Right ventricle myocardium inferior (tissue), 1 donor: ENCODE measurements at regions of chr17 and their contacts with region 1.

Region 1: DNA sequence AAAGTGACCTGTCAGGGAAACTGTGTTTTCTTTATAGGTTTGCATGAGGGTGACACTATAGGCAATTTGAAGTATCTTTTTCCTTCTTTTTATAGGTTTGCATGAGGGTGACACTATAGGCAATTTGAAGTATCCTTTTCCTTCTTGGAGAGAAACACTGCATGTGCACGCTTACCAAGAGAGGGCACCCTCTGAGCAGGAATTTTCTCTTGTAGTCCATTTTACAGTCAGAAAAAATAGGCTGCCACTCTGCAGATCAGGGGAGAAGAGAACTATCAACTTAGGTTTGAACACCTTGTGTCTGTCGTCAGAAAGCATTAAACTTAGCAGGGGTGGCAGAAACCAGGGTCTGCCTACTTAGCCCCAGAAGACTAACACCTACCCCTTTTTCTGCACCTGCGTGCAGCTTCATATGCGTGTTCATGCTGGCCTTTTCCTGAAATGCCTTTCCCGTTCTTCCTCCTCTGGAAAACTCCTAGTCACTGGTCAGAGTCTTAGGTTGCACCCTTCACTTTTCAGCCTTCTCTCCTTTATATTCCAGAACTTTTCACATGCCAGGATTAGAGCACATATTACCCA is 16.4 kb upstream of the SMIM36 start:
- DNase-seq: no peak
- ATAC-seq: peak; percentile 78

Region 2: DNA sequence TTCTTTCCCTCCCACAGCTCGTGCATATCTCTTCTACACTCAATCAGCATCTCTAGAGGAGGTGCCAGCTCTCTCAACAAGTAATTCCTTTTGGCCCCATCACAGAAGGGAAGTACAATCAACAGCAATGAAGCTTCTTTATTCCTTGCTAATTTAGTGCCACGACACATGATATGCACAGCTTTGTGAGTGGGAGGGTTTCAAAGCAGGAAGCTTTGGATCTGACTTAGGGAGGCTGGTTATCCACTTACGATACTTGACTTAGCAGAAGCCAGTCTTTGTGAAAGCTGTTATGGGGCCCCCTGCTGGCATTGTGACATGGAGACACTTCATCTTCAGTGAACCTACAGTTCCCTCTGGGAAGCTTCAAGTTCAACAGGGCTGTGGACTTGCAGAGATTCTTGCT is 114.0 kb after region 1 on chr17:
- intact Hi-C with region 1: loop called (anchors 2 kb)
- DNase-seq: no peak
- ATAC-seq: peak; percentile 78

Region 3: GRCh38 chr17:55717898-55718735 is 190.5 kb after region 1 on chr17:
- intact Hi-C with region 1: loop called (anchors 2 kb)
- DNase-seq: peak; percentile 86
- ATAC-seq: peak; percentile 51

Region 4: GRCh38 chr17:55770148-55770870 is 242.7 kb after region 1 on chr17:
- intact Hi-C with region 1: loop called (anchors 2 kb)
- DNase-seq: no peak
- ATAC-seq: peak; percentile 57

Region 5: DNA sequence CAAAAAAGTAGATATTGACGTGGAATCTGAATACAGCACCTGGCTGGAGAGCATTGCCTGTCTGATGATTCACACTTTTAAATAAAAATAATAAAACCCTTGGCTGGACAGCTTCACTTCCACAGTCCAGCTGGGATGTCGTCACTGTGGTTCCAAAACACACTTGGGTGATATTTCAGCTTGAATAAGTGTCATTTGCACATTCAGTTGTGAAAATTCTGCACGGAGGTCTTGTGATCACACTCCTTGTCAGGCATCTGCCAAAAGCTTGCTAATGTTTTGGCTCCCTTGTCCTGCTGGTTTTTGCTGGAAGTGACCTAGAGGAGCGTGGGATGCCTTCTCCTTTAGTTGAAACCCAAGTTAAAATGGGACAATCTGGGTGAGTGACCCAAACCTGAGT is 283.9 kb after region 1 on chr17:
- intact Hi-C with region 1: no loop called
- DNase-seq: no peak
- ATAC-seq: peak; percentile 54

Region 6: DNA sequence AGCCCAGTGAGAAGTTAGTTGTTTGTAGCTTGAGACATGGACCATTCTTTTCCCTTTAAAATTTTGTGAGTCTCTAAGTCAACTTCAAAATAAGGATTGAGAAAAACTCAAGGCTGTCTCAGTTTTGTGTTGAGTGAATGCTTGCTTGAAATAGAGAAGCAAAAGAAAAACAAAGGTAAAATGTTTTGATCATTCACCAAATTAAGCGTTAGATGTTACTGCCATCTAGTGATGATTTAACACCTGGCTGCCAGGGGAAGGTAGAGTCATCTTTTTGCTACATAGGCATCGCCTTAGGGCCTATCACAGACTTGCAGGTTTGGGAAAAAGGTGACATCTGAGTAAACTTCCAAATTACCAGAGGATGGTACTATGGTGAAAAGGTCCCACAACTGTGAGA is 297.6 kb after region 1 on chr17:
- intact Hi-C with region 1: loop called (anchors 1 kb)
- DNase-seq: no peak
- ATAC-seq: no peak